ENCODE measurements at regions of chr11 and their contacts with region 1.

Region 1: DNA sequence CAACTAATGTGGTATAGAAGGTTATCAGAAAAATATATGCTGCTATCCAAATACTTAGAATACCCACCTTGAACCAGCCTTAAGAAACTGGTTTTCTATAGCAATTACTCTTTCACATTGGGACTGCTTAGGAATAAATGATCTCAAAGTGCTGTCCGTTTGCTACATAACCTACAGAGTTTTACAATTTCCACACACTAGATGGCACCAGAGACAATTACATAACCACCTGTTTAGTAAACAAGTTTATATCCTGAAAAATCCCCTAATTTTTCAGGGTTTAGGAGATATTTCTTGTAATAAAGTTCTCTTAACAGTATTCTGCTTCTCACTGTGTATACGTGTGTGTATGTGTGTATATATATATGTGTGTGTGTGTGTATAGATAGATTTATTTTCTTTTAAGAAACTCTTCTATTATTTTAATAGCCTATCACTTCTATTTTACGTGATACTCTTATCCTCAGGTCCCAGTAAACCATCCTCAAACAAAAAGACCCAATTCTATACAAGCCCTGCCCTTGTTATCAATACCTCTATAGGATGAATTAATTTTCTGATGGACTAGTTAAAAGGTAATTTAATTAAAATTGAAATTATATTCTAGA is 6.7 kb upstream of the OR5I1 start:
- DNase-seq: no peak
- ATAC-seq: no peak

Region 2: DNA sequence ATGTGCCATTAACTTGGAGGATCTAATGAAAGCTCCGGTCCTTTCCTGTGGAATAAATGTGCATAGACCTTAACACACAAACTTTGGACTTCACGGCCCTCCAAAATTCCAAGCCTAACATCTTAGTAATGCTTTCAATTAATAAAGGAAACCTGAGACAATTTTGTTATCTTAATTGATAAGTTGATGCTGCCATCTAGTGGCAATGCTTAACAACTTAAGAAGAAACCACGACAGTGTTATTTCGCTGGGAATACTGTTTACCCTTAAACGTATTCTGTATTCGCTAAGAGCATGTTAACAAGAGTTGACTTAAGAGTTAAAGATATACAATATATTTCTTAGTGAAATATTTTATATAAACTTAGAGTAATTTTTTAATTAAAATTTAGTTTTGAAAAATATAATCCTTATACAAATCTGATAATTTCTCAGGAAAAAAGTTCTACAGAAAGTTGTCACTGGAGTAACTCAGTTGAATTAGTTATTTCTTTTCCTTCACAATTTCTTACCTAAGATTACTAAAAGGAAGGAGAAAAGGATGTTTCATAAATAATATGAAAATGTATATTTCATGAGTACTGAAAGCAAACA is 840.7 kb after region 1 on chr11:
- intact Hi-C with region 1: loop called (anchors 10 kb)
- DNase-seq: no peak
- ATAC-seq: no peak